Right ventricle myocardium inferior (tissue), 1 donor: ENCODE measurements at regions of chr1 and their contacts with region 1.

Region 1: DNA sequence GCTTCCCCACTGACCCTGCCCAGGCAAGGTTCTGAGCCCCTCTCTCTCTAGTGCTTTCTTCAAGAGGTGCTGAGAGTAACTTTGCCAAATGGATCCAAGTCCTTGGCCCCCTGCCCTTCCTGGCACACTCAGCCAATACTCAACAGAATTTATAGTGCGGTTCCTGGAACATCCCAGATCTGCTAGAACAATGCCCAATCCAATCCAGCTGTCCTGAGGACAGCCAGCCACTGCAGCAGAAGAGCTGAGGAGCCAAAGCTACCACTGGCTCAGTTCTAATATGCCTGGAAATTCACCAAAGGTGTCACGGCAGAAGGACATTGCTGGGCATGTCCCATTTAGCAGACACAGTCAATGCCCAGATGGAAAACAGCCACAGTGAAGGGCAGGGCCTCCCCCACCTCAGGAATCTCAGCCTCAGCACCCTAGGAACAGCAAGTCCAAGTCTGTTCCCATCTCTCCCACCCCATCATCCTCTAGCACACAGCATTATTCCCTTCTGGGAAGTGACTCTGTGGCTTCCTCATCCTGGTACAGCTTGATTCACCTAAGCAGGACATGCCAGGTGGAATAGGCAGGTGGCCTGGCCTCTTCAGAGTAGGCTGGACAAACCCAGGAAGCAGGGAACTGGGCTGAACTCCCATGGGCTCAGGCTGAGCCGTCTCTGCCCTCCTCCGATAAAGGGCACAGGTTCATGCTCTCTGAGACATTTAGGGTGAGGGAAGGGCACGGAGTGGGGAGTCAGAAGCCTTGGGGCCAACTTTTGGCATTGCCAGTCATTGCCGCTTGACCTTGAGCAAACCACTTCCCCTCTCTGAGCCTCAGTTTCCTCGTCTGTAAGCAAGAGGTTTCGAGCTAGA is 24.6 kb downstream of the PMVK start:
- DNase-seq: no peak
- ATAC-seq: peak; percentile 85

Region 2: DNA sequence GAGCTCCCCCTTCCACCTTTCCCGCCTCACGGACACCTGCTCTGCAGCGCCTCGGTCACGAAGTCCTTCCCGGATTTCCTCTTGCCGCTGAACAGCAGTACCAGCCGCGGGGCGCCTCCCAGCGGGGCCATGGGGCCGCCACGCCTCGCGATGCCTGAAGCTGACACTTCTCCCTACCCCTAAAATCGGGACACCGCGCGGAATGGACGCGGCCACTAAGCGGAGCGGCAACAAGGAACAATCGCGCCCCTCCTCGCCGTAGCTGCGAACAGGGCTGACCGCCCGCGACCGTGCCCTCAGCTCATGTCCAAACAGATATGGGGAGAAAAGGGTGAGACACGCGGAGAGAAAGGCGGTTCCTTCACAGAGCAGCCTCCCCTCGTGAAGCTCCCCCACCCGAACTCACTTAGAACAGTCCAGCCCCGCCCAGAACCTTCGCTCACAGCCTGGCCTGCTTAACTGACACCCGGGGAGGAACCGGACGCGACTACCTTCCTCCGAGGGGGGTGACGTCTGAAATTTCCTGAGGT is 24.7 kb after region 1 on chr1 and contains the start of gene PMVK:
- intact Hi-C with region 1: loop called (anchors 2 kb)
- DNase-seq: peak; percentile 97
- ATAC-seq: peak; percentile 96
- total RNA-seq, gene PMVK: 71.1 TPM